Activated CD4-positive, alpha-beta T cell treated with anti-CD3 and anti-CD28 coated beads for 36 hours (primary cell): ENCODE measurements at regions of chr12 and their contacts with region 1.

Region 1: DNA sequence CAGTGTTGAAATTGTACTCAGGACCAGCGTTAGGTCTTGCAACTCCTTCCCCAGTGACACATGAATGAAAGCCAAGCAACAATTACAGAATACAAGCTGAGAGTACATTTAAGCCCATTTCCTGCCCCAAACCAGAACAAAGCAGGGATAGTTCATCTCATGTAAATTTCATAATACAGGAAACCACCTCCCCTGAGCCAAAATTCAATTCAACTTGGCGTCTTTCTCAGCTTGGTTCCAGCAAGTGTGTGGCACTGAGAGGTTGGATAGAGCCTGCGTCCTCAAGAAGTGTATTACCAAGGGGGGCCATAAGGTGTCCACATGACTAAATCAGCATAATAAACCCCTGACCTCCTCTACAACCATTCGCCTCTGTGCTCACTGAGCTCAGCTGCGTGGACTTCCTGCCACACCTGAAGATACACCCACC is 278.9 kb upstream of the CRY1 start:
- DNase-seq: peak; percentile 52
- ATAC-seq: peak; percentile 52
- H3K4me3 Mint-ChIP-seq: peak overlapping the region; percentile 10
- H3K27ac Mint-ChIP-seq: peak overlapping the region; percentile 99
- H3K4me1 Mint-ChIP-seq: peaks cover 80% of the 10 kb centered on the region
- H3K27me3 Mint-ChIP-seq: no peaks in the 10 kb centered on the region

Region 2: DNA sequence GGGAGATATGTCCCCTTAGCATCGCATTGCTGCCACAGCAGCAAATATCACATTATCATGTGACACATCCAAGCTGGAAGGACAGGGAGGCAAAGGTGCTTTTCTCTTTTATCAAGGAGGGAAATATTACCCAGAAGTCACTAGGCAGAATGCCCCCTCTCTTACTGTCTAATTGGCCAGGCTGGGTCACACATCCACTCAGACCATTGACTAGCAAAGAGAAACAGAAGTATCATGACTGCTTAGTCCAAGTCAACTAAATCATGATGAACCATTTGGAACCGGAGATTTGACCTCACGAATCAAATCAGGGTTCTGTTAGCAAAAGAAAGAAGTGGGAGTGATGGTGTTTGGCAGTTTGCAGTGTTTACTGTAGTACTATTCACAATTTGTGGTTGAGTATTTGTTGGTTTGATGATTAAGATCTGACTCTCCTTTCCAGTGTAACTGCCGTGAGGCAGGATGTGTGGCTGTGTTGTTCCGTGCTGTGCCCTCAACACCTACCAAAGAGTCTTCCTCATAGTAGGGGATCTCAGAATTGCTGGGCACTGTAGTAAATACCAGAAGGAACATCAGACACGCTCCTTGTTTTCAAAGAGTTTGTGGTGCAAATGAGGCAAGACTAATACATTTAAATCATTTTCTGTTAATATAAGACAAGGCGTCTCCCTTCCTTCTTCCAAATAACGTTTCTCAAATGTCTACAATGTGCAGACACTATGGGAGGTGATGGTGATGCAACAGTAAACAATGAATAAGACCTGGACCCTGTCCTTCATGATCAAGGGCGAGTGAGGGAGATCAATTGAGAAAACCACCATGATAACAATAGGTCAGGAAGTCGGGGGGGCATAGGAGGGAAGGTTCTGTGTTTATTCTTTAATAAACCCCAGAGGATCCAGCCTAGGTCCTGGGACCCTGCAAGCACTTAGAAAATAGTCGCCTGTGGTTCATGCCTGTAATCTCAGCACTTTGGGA is 84.5 kb before region 1 on chr12:
- CTCF ChIA-PET with region 1: no interaction called
- POLR2A ChIA-PET with region 1: no interaction called
- intact Hi-C with region 1: loop called in 1 of 2 experiments (anchors 1 kb)
- DNase-seq: peak; percentile 65
- ATAC-seq: peak; percentile 97
- H3K4me3 Mint-ChIP-seq: no peak overlapping the region
- H3K27ac Mint-ChIP-seq: peak overlapping the region; percentile 61
- H3K4me1 Mint-ChIP-seq: peaks cover 8% of the 10 kb centered on the region
- H3K27me3 Mint-ChIP-seq: no peaks in the 10 kb centered on the region

Region 3: DNA sequence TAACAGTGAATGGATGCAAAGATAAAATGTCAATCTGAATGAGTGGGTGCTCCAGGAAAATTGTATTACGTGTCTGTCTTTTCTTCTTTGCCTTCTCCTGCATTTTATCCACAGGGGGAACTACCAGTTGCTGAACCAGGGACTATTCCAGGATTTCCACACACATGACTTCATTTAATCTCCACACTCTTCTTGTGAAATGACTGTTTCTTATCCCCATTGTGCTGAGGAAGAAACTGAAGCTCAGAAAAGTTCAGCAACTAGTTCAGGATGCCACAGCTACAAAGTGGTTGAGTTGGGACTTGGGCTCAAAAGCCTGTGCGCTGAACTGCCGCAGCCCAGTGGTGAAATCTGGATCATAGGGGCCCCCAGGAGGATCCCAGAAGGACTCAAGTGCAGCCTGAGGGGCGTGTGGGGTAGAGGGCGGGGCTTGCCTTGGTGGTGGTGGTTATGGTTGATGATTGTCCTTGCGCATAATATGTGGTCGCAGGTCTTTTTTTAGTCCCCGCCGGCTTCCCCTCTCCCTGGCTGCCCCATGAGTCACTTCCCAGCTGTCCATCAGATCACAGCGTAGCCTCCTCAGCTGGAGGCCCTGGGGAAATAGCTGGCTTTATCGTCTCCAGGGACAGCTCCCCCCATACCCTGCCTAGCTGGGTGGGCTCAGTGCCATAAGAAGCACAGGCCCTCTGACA is 43.7 kb before region 1 on chr12:
- CTCF ChIA-PET with region 1: interaction called, 5 read pairs
- POLR2A ChIA-PET with region 1: interaction called, 3 read pairs
- intact Hi-C with region 1: loop called (anchors 1 to 2 kb)
- DNase-seq: peak; percentile 49
- ATAC-seq: peak; percentile 10
- H3K4me3 Mint-ChIP-seq: no peak overlapping the region
- H3K27ac Mint-ChIP-seq: no peak overlapping the region
- H3K4me1 Mint-ChIP-seq: peaks cover 77% of the 10 kb centered on the region
- H3K27me3 Mint-ChIP-seq: peaks cover 2% of the 10 kb centered on the region

Region 4: DNA sequence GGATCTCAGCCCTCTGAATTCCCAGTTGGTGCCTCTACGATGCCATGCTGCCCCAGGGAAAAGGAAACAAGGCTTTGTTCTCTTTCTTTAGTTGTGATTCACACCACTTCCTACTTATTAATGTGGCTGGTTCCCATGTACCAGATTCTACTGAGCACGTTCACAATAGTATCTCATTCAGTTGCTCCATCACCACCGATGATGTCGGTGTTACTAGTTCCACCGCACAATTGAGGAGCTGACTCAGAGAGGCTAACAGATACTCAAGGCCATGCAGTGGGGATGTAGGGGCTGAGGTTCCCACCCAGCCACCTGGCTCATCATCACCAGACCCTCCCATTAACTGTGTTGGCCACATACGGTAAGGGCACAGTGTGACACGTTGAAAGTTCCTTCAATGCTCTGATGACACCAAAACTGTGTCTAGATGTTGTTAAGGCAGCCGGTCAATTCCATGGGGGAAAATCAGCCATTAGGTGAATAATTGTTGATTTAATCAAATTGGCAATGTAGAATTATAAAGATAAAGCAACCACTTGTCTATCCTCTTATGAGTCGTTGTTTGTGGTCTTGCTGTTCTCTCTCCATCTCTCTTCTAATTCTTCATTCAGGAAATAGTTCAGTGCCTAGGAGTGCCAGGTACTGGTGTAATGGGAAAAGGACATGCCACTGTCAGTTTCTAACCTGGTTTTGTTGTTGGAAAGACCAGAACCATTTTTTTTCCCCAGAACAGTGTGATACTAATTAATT is 34.7 kb before region 1 on chr12:
- CTCF ChIA-PET with region 1: no interaction called
- POLR2A ChIA-PET with region 1: no interaction called
- intact Hi-C with region 1: loop called (anchors 1 kb)
- DNase-seq: peak; percentile 62
- ATAC-seq: peak; percentile 94
- H3K4me3 Mint-ChIP-seq: no peak overlapping the region
- H3K27ac Mint-ChIP-seq: peak overlapping the region; percentile 18
- H3K4me1 Mint-ChIP-seq: peaks cover 49% of the 10 kb centered on the region
- H3K27me3 Mint-ChIP-seq: no peaks in the 10 kb centered on the region

Region 5: DNA sequence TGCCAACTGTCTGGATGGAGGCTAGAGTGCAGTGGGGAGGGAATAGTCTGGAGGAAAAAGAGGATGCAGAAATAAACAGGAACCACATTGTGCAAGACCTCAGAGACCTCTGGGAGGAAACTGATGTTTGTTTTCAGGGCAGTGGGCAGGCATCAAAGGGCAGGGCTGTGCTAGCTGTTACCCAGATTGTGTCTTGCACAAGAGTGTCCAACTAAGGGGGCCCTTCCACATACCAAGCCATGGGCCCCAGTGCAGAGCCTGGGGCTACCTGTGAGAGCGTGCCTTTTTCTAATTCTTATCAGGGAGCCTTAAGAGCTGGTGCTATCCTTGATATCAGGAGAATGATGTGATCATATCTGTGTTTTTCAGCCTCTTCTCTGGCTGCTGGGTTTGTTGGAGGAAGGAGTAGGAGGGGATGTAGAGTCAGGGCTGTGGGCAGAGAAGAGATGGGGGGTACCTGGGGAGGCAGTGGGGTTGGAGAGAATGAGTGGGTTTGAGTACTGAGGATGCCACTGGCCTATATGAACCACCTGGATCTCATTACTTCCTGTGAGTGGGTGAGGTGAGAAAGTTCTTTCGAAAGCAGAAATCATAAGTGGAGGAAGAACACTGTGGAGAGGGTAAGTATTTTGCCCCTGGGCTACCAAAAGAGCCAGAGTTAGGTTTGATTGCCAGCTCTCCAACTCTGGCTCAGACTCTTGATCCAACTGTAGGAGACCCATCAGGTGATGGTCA is 19.7 kb before region 1 on chr12:
- CTCF ChIA-PET with region 1: interaction called, 6 read pairs
- POLR2A ChIA-PET with region 1: no interaction called
- intact Hi-C with region 1: loop called in 1 of 2 experiments (anchors 2 kb)
- DNase-seq: peak; percentile 56
- ATAC-seq: peak; percentile 83
- H3K4me3 Mint-ChIP-seq: peak overlapping the region; percentile 45
- H3K27ac Mint-ChIP-seq: peak overlapping the region; percentile 79
- H3K4me1 Mint-ChIP-seq: peaks cover 54% of the 10 kb centered on the region
- H3K27me3 Mint-ChIP-seq: no peaks in the 10 kb centered on the region

Region 6: GRCh38 chr12:107402041-107403022 is 30.1 kb after region 1 on chr12:
- CTCF ChIA-PET with region 1: interaction called, 17 read pairs
- POLR2A ChIA-PET with region 1: no interaction called
- intact Hi-C with region 1: loop called (anchors 1 to 2 kb)
- DNase-seq: peak; percentile 80
- ATAC-seq: peak; percentile 88
- H3K4me3 Mint-ChIP-seq: no peak overlapping the region
- H3K27ac Mint-ChIP-seq: no peak overlapping the region
- H3K4me1 Mint-ChIP-seq: peaks cover 12% of the 10 kb centered on the region
- H3K27me3 Mint-ChIP-seq: no peaks in the 10 kb centered on the region

Region 7: GRCh38 chr12:107448198-107448597 is 76.0 kb after region 1 on chr12:
- CTCF ChIA-PET with region 1: no interaction called
- POLR2A ChIA-PET with region 1: no interaction called
- intact Hi-C with region 1: no loop called
- DNase-seq: peak; percentile 23
- ATAC-seq: peak; percentile 36
- H3K4me3 Mint-ChIP-seq: no peak overlapping the region
- H3K27ac Mint-ChIP-seq: no peak overlapping the region
- H3K4me1 Mint-ChIP-seq: peaks cover 3% of the 10 kb centered on the region
- H3K27me3 Mint-ChIP-seq: no peaks in the 10 kb centered on the region